BJ (cell line): ENCODE measurements at regions of chr11 and their contacts with region 1.

Region 1: GRCh38 chr11:47454180-47454644 is 5.3 kb upstream of the RAPSN start:
- DNase-seq: peak; percentile 30
- H3K4me3 ChIP-seq: no peak overlapping the region
- H3K27me3 ChIP-seq: no peaks in the 10 kb centered on the region
- CTCF ChIP-seq: peak; percentile 85

Region 2: DNA sequence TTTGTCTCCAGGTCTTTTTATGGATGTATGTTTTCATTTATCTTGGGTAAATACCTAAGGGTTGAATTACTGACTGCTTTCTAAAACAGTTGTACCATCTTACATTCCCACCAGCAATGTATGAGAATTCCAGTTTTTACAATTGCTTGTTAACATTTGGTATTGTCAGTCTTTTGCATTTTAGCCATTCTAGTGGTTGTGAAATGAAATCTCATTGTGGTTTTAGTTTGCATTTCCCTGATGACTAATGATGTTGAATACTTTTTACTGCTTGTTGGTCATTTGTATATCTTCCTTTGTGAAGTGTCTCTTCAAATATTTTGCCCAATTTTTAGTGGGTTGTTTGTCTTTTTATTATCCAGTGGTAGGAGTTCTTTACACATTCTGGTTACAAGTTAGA is 370.3 kb before region 1 on chr11:
- CTCF ChIA-PET with region 1: no interaction called
- POLR2A ChIA-PET with region 1: no interaction called
- DNase-seq: peak; percentile 86
- H3K4me3 ChIP-seq: no peak overlapping the region
- H3K27me3 ChIP-seq: no peaks in the 10 kb centered on the region
- CTCF ChIP-seq: no peak

Region 3: DNA sequence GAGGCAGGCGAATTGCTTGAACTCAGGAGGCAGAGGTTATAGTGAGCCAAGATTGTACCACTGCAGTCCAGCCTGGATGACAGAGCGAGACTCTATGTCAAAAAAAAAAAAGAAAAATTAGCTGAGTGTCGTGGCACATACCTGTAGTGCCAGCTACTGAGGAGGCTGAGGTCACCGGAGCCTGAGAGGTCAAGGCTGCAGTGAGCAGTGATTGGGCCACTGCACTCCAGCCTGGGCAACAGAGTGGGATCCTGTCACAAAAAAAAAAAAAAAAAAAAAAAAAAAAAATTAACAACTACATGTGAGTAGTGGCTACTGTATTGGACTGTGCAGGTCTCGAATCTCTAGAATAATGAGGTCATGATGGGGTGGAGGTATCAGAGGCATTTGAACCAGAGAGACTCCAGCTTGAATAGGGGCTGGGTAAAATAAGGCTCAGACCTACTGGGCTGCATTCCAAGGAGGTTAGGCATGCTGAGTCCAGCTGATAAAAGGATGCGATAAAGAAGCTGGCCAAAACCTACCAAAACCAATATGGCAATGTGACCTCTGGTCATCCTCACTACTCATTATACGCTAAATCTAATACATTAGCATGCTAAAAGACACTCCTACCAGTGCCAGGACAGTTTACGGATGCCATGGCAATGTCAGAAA is 262.2 kb before region 1 on chr11:
- CTCF ChIA-PET with region 1: no interaction called
- POLR2A ChIA-PET with region 1: no interaction called
- DNase-seq: no peak
- H3K4me3 ChIP-seq: no peak overlapping the region
- H3K27me3 ChIP-seq: no peaks in the 10 kb centered on the region
- CTCF ChIP-seq: no peak

Region 4: GRCh38 chr11:47248664-47249377 is 205.4 kb before region 1 on chr11 and contains the start of gene ACP2:
- CTCF ChIA-PET with region 1: no interaction called
- POLR2A ChIA-PET with region 1: no interaction called
- DNase-seq: no peak
- H3K4me3 ChIP-seq: peak within 1 kb of the TSS; percentile 69
- H3K27me3 ChIP-seq: no peaks in the 10 kb centered on the region
- CTCF ChIP-seq: peak; percentile 48
- polyA plus RNA-seq, gene ACP2: 24.6 and 31.1 TPM in 2 replicates

Region 5: DNA sequence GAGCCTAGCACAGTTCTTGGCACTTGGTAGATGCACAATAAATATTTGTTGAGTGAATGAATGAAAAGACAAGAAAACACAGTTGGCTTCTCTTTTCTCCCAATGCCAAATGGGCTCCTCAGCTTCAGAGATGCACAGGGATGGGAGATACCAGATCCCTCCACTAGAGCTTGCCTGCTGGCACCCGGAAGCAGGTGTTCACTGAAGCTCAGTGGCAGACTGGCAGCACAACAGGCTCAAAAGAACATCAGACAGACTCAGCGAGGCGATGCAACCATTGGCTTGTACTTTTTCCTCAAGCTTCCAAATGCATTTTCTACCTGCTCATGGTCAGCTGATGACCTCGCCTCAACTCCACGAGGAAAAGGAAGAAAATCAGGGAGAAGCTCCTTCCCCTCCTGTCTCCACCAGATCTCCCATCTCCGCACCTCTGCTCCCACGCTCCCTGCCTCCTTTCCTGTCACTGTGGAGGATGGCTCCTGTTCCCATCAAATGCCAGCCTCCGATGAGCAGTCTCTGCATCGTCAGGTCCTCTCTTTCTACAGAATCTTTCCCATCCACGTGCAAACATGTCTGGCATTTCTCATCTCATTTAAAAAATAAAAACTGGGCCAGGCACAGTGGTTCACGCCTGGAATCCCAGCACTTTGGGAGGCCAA is 11.0 kb before region 1 on chr11:
- CTCF ChIA-PET with region 1: interaction called, 20 read pairs
- POLR2A ChIA-PET with region 1: no interaction called
- DNase-seq: no peak
- H3K4me3 ChIP-seq: no peak overlapping the region
- H3K27me3 ChIP-seq: no peaks in the 10 kb centered on the region
- CTCF ChIP-seq: no peak

Region 6: GRCh38 chr11:47553417-47553765 is 99.2 kb after region 1 on chr11:
- CTCF ChIA-PET with region 1: no interaction called
- POLR2A ChIA-PET with region 1: no interaction called
- DNase-seq: no peak
- H3K4me3 ChIP-seq: peak overlapping the region; percentile 31
- H3K27me3 ChIP-seq: no peaks in the 10 kb centered on the region
- CTCF ChIP-seq: no peak